ENCODE measurements at regions of chr4 and their contacts with region 1.

Region 1: DNA sequence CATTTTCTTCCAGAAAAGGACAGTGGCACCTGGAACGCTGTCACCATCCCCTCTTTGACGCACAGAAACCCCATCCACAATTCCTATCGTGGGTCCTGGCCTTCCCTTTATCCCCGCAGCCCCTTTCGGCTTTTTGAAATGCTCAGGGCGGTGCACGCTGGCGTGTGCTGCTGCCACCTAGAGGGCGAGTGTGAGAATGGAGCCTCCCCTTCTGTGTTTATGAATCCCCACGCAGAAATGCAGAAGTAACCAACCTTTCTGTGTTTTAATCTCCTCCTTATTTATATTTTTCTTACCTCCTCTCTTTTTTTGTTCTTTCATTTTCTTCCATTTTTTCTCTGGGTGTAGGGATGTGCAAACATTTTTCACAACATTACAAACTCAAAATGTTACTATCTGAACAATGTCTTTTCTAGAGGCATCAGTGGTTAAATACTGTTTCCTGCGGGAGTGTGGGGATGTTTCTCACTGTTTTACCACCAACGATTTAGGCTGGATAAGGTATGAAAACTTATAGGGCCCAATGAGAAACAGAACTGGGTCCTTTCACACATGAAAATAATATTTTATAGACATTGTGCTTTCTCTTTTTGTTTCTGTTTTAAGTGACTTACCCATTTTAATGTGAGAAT is 50.0 kb downstream of the TMA16 start:
- DNase-seq: peak; percentile 79
- ATAC-seq: peak; percentile 92
- H3K4me3 Mint-ChIP-seq: no peak overlapping the region
- H3K27ac Mint-ChIP-seq: no peak overlapping the region
- H3K4me1 Mint-ChIP-seq: peaks cover 3% of the 10 kb centered on the region
- H3K27me3 Mint-ChIP-seq: no peaks in the 10 kb centered on the region

Region 2: DNA sequence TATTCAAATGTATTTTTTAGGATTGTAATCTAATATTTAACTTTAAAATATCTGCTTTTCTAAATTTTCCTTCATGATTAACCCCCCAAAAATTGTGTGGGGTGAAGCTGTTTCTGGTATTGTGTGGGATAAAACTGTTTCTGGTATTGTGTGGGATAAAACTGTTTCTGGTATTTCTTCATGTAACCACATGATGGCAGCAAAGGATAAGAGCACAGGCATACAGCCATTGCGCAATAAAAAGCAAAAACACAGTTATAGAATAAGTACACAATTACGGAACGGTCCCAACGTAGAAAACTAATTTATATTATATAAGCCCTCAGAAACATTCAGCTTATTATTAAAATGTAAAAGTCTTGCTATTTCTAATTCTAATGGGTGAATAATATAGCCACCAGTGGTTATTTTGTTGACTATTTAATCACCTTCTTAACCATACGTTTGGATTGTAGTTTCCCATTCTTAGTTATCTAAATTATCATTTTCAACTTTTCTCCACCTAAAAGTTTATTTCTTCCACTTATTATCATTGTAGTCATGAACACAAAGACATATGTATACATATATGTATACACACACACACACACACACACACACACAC is 1046.9 kb before region 1 on chr4:
- CTCF ChIA-PET with region 1: no interaction called
- POLR2A ChIA-PET with region 1: no interaction called
- intact Hi-C with region 1: loop called (anchors 1 to 2 kb)
- DNase-seq: peak; percentile 11
- ATAC-seq: no peak
- H3K4me3 Mint-ChIP-seq: no peak overlapping the region
- H3K27ac Mint-ChIP-seq: no peak overlapping the region
- H3K4me1 Mint-ChIP-seq: no peaks in the 10 kb centered on the region
- H3K27me3 Mint-ChIP-seq: peaks cover 1% of the 10 kb centered on the region

Region 3: DNA sequence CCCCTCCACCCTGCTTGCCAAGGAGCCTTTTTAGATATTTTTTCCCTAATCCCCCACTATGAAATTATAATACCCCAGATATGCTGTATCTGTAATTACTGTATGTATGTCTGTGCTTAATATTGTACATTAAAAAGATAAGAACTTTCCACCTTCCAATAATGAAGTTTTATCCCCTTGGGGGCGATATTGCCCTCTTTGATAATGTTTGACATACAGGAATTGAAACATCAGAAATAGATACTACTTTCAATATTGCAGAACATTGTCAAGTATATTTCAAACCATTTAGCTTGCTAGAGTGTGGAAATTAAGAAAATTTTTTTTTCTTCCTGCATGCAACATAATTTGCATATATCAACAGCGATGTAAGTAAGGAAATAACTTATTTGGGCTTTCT is 436.8 kb before region 1 on chr4:
- CTCF ChIA-PET with region 1: no interaction called
- POLR2A ChIA-PET with region 1: no interaction called
- intact Hi-C with region 1: loop called (anchors 1 to 10 kb)
- DNase-seq: no peak
- ATAC-seq: no peak
- H3K4me3 Mint-ChIP-seq: no peak overlapping the region
- H3K27ac Mint-ChIP-seq: no peak overlapping the region
- H3K4me1 Mint-ChIP-seq: peaks cover 10% of the 10 kb centered on the region
- H3K27me3 Mint-ChIP-seq: no peaks in the 10 kb centered on the region

Region 4: GRCh38 chr4:163332500-163333406 is 211.8 kb before region 1 on chr4 and contains the start of gene NPY1R:
- CTCF ChIA-PET with region 1: no interaction called
- POLR2A ChIA-PET with region 1: no interaction called
- intact Hi-C with region 1: loop called in 1 of 2 experiments (anchors 5 kb)
- DNase-seq: peak; percentile 67
- ATAC-seq: peak; percentile 63
- H3K4me3 Mint-ChIP-seq: peak within 1 kb of the TSS; percentile 56
- H3K27ac Mint-ChIP-seq: no peak within 1 kb of the TSS
- H3K4me1 Mint-ChIP-seq: peaks cover 14% of the 10 kb centered on the region
- H3K27me3 Mint-ChIP-seq: peaks cover 40% of the 10 kb centered on the region
- total RNA-seq, gene NPY1R: not detected

Region 5: GRCh38 chr4:163494360-163495162 is 50.0 kb before region 1 on chr4 and contains the start of gene TMA16:
- CTCF ChIA-PET with region 1: interaction called, 11 read pairs
- POLR2A ChIA-PET with region 1: interaction called, 8 read pairs
- intact Hi-C with region 1: loop called (anchors 2 kb)
- DNase-seq: peak; percentile 92
- ATAC-seq: peak; percentile 91
- H3K4me3 Mint-ChIP-seq: peak within 1 kb of the TSS; percentile 99
- H3K27ac Mint-ChIP-seq: peak within 1 kb of the TSS; percentile 100
- H3K4me1 Mint-ChIP-seq: peaks cover 27% of the 10 kb centered on the region
- H3K27me3 Mint-ChIP-seq: no peaks in the 10 kb centered on the region
- total RNA-seq, gene TMA16: 54.7 to 63.6 TPM

Region 6: DNA sequence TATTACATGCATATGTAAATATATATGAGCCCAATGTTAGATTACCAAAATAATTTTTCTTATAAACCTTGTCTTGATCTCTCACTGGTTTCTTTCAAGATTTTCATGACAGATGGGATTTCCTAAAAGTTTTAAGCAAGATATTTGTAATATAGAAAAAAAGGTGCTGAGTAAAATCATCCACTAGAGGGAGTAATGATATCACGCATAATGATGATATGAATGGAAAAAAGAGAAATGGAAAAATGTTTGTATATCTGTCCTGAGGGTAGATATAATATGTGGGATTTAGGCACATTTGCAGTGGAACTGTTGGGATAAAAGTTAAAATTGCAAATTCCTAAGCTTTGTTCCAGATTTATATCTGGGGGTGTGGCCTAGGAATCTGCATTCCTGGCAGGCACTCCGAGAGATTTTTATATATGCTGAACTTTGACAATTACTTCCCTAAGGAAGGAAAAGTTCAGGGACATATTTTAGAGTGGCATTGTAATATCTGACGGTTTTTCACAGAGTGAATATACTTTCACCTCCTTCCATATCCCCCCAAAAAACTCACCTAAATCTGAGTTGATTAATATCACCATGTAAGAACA is 10.4 kb after region 1 on chr4:
- CTCF ChIA-PET with region 1: interaction called, 42 read pairs
- POLR2A ChIA-PET with region 1: no interaction called
- intact Hi-C with region 1: no loop called
- DNase-seq: no peak
- ATAC-seq: no peak
- H3K4me3 Mint-ChIP-seq: no peak overlapping the region
- H3K27ac Mint-ChIP-seq: no peak overlapping the region
- H3K4me1 Mint-ChIP-seq: peaks cover 34% of the 10 kb centered on the region
- H3K27me3 Mint-ChIP-seq: no peaks in the 10 kb centered on the region

Region 7: GRCh38 chr4:163681208-163681821 is 136.8 kb after region 1 on chr4:
- CTCF ChIA-PET with region 1: interaction called, 125 read pairs
- POLR2A ChIA-PET with region 1: no interaction called
- intact Hi-C with region 1: no loop called
- DNase-seq: peak; percentile 13
- ATAC-seq: peak; percentile 74
- H3K4me3 Mint-ChIP-seq: no peak overlapping the region
- H3K27ac Mint-ChIP-seq: no peak overlapping the region
- H3K4me1 Mint-ChIP-seq: no peaks in the 10 kb centered on the region
- H3K27me3 Mint-ChIP-seq: no peaks in the 10 kb centered on the region

Measured in activated CD4-positive, alpha-beta T cell treated with anti-CD3 and anti-CD28 coated beads for 36 hours (primary cell).